Endothelial cell of umbilical vein (primary cell): ENCODE measurements at regions of chr6 and their contacts with region 1.

Region 1: DNA sequence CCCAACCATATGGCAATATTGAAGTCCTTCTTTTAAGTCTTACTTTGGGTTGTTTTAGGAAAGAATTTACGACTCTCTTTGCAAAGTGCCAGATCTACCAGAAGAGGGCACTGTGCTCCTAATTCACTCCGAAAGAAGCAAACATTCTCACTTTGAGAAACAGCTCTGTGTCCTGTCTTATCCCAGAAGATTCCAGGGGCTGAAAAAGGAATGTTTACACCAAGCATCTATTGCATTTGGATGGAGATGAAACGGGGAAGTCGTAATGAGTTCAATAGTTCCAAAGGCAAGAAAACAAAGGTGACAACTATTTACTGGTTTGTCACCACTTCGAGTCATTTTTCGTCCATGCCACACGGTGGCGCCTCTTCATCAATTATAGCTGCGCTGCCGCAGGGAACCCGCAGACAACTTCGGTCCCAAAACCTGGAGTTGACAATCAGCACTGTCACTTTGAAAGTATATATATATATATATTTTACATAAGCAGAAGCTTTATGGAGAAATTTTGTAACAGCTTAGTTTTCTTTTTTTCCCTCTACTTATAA is 121.6 kb downstream of the MOXD1 start:
- DNase-seq: peak; percentile 86
- H3K4me3 ChIP-seq: peak overlapping the region; percentile 8 to 59 (median 15)
- H3K27ac ChIP-seq: no peak overlapping the region
- H3K4me1 ChIP-seq: no peaks in the 10 kb centered on the region
- H3K27me3 ChIP-seq: peaks cover 4 to 8% of the 10 kb centered on the region in 2 experiments
- CTCF ChIP-seq: peak; percentile 64 to 78
- POLR2A ChIP-seq: no peak

Region 2: DNA sequence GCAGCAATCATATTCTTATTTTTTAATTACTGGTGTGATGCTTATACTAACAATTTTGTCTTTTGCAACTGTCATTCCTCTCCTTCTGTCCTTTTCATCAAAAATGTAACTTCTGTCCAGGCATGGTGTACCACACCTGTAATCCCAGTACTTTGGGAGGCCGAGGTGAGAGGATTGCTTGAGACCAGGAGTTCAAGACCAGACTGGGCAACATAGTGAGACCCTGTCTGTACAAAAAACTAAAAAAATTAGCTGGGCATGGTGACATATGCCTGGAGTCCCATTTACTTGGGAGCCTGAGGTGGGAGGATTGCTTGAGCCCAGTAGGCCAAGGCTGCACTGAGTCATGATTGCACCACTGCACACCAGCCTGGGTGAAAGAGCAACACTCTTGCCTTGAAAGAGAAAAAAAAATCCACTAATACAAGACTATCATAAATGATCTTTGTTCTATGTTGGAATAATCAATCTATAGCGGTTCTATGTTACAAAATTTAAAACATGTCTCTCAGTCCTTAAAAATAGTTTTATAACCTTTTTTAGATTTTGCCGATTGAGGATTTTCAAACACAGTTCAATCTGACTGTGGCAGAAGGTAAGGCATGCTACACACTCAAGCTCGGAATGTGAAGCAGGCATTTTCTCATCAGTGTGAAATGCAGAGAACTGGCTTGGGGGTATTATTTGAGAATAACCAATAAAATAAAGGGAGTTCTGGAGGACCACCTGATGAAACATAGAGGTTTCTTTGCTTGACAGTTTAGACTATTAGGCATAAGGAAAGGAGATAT is 401.5 kb before region 1 on chr6:
- CTCF ChIA-PET with region 1: no interaction called
- POLR2A ChIA-PET with region 1: no interaction called
- dilution Hi-C with region 1: no loop called
- intact Hi-C with region 1: no loop called
- DNase-seq: no peak
- H3K4me3 ChIP-seq: no peak overlapping the region
- H3K27ac ChIP-seq: no peak overlapping the region
- H3K4me1 ChIP-seq: no peaks in the 10 kb centered on the region
- H3K27me3 ChIP-seq: no peaks in the 10 kb centered on the region
- CTCF ChIP-seq: no peak
- POLR2A ChIP-seq: no peak

Region 3: DNA sequence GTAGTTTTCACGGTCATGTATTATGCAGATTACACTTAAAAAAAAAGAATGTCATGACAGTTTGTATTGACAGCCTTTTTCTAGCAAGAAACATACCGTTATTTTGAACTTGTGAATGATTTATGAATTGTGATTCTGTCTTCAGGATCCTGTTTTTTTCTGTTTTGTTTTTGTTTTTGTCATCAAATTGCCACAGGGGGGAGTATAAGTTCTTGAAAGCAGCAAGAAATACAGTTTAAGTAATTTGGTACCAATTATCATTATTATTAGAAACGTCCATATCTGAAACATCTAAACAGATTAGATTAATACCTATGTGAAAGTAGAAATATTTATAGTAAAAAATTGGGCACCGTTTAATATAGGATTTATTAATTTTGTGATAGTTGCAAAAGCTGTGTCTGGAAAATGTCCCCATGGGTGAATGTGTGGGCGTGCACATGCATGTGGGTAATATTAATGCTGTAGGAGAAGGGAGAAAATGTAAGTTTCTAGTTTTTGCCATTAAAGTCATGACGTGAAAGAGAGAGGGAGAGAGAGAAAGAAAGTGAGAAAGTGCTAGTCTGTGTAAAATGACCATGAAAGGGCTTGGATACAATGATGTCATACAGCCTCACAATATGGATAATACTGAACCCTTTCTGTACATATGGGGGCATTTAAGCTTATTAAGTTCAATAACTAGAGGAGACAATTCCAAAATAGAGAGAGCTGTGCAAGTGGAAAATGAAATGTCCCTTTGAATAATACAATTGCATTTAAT is 319.1 kb before region 1 on chr6:
- CTCF ChIA-PET with region 1: interaction called, 10 read pairs
- POLR2A ChIA-PET with region 1: no interaction called
- dilution Hi-C with region 1: no loop called
- intact Hi-C with region 1: no loop called
- DNase-seq: peak; percentile 76
- H3K4me3 ChIP-seq: no peak overlapping the region
- H3K27ac ChIP-seq: peak overlapping the region; percentile 19
- H3K4me1 ChIP-seq: peaks cover 11% of the 10 kb centered on the region
- H3K27me3 ChIP-seq: no peaks in the 10 kb centered on the region
- CTCF ChIP-seq: peak in 1 of 2 donors; percentile 12
- POLR2A ChIP-seq: no peak

Region 4: GRCh38 chr6:132253211-132253610 is 26.5 kb before region 1 on chr6:
- CTCF ChIA-PET with region 1: interaction called, 69 read pairs
- POLR2A ChIA-PET with region 1: no interaction called
- dilution Hi-C with region 1: no loop called
- intact Hi-C with region 1: no loop called
- DNase-seq: no peak
- H3K4me3 ChIP-seq: no peak overlapping the region
- H3K27ac ChIP-seq: no peak overlapping the region
- H3K4me1 ChIP-seq: no peaks in the 10 kb centered on the region
- H3K27me3 ChIP-seq: peaks cover 0 to 2% of the 10 kb centered on the region in 2 experiments
- CTCF ChIP-seq: no peak
- POLR2A ChIP-seq: no peak

Region 5: GRCh38 chr6:132365281-132365907 is 85.7 kb after region 1 on chr6:
- CTCF ChIA-PET with region 1: interaction called, 13 read pairs
- POLR2A ChIA-PET with region 1: no interaction called
- dilution Hi-C with region 1: no loop called
- intact Hi-C with region 1: no loop called
- DNase-seq: no peak
- H3K4me3 ChIP-seq: no peak overlapping the region
- H3K27ac ChIP-seq: no peak overlapping the region
- H3K4me1 ChIP-seq: no peaks in the 10 kb centered on the region
- H3K27me3 ChIP-seq: peaks cover 15 to 27% of the 10 kb centered on the region in 2 experiments
- CTCF ChIP-seq: no peak
- POLR2A ChIP-seq: no peak

Region 6: DNA sequence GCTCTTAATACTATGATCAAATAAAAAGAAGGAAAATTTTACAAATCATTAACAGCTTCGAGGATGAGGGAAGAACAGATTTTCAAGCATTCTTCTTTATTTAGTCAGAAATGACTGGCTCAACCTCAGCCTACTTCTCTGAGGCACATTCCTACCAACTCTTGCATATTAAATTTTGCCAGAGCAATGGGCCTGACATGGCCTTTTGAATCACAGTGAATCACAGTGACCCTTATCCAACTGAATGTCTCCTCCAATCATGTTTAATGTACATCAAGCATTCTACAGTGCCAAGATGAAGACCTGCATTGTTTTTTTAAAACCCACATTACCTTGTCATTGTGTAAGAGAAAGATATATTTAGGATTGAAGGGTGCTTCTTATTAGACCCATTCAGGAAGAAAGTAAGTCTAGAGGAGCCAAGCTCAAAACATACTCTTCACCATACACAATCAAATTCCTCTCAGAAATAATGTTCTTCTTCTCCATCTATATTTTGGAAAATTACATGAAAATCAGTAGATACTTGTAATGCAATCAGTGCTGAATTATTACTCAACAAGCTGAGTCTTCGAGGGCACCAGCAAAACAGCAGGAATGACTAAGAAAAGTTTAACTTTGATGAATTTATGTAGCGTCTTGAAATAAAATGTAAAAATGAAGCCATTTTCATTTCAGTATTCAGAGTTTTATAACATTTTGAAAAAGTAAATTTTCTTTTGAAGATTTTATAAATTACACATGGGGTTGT is 165.7 kb after region 1 on chr6:
- CTCF ChIA-PET with region 1: interaction called, 16 read pairs
- POLR2A ChIA-PET with region 1: no interaction called
- dilution Hi-C with region 1: no loop called
- intact Hi-C with region 1: no loop called
- DNase-seq: no peak
- H3K4me3 ChIP-seq: no peak overlapping the region
- H3K27ac ChIP-seq: no peak overlapping the region
- H3K4me1 ChIP-seq: no peaks in the 10 kb centered on the region
- H3K27me3 ChIP-seq: no peaks in the 10 kb centered on the region
- CTCF ChIP-seq: no peak
- POLR2A ChIP-seq: no peak

Region 7: DNA sequence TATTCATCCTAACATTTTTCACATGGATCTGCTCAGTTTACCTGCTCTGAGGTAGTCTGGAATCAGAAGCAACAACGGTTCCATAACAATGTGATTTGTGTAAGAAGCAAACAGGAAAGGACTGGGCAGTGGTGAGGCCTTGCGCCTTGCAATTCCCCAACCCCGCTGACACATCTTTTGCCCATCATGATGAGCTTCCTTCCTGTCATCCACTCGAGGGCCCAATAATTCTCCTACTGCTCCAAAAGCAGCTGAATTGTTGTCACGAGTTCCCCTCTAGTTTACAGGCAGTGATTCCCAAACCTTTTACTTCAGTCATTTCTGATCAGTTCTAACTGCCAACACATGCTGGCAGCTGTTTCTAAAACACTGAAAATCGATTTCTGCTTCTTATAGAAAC is 210.4 kb after region 1 on chr6:
- CTCF ChIA-PET with region 1: interaction called, 254 read pairs
- POLR2A ChIA-PET with region 1: no interaction called
- dilution Hi-C with region 1: no loop called
- intact Hi-C with region 1: no loop called
- DNase-seq: peak; percentile 53
- H3K4me3 ChIP-seq: no peak overlapping the region
- H3K27ac ChIP-seq: peak overlapping the region; percentile 4
- H3K4me1 ChIP-seq: peaks cover 23% of the 10 kb centered on the region
- H3K27me3 ChIP-seq: no peaks in the 10 kb centered on the region
- CTCF ChIP-seq: no peak
- POLR2A ChIP-seq: no peak

Region 8: GRCh38 chr6:132798869-132799538 is 519.3 kb after region 1 on chr6:
- CTCF ChIA-PET with region 1: interaction called, 16 read pairs
- POLR2A ChIA-PET with region 1: no interaction called
- dilution Hi-C with region 1: no loop called
- intact Hi-C with region 1: loop called (anchors 5 kb)
- DNase-seq: peak; percentile 86
- H3K4me3 ChIP-seq: peak overlapping the region; percentile 95 to 97 (median 96)
- H3K27ac ChIP-seq: peak overlapping the region; percentile 26
- H3K4me1 ChIP-seq: peaks cover 3% of the 10 kb centered on the region
- H3K27me3 ChIP-seq: peaks cover 0 to 3% of the 10 kb centered on the region in 2 experiments
- CTCF ChIP-seq: peak; percentile 78 to 84
- POLR2A ChIP-seq: no peak